ENCODE measurements at regions of chr1 and their contacts with region 1.

Region 1: DNA sequence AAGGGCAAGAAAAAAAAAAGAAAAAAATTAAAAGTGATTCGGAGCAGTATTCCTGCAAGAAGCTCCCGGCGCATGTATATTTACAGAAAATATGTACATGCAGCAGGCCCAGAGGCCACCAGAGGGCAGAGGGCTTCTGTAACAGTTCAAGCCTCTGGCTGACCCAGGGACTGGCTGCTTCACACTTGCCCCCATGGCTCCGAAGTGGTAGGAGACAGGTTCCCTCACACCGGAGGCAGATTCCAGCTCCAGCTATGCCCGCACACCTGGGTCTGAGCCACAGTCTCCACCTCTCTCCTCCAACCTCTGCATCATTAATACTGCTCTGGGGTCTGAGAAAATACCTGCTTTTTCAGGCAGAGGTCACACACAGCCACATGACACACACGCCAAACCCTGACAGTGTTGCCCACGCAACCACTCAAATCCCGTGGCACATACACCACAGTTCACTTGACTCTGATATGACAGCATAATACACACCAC is 2.2 kb upstream of the ARHGAP30 start:
- DNase-seq: peak; percentile 61
- H3K4me3 Mint-ChIP-seq: no peak overlapping the region
- H3K27ac Mint-ChIP-seq: peak overlapping the region; percentile 36
- H3K4me1 Mint-ChIP-seq: peaks cover 40% of the 10 kb centered on the region
- H3K27me3 Mint-ChIP-seq: no peaks in the 10 kb centered on the region

Region 2: GRCh38 chr1:160789702-160790611 is 282.0 kb before region 1 on chr1:
- CTCF ChIA-PET with region 1: no interaction called
- POLR2A ChIA-PET with region 1: no interaction called
- DNase-seq: no peak
- H3K4me3 Mint-ChIP-seq: no peak overlapping the region
- H3K27ac Mint-ChIP-seq: no peak overlapping the region
- H3K4me1 Mint-ChIP-seq: peaks cover 9% of the 10 kb centered on the region
- H3K27me3 Mint-ChIP-seq: peaks cover 4% of the 10 kb centered on the region

Region 3: DNA sequence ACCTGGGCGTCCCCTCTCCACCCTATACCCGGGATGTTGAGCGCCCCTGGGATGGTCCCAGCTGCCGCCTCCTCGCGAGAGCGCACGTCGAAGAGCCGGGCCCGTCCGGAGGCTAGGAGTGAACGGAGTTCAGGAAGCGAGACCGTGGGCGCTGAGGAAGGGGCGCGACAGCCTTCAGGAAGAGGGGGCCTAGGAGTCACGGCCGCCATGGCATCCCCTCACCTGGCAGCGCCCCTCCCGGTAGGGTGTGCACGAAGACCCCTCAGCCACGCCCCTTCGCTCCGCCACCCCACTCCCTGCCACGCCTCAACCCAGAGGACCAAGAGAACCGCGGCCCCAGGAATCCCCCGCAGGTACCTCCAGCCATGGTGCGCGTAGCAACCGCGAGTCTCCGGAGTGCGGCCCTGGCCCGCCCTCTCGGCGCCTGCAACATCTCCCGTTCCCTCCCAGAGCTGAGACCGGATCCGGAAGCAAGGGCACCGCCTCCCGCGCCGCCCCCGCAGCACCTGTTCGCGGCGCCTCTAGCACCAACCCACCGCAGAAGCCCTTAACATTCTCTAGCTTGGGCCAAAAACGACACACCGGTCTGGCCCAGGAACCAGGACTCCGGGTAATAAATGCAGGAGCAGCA is 33.3 kb before region 1 on chr1 and contains the start of gene TSTD1:
- CTCF ChIA-PET with region 1: interaction called, 21 read pairs
- POLR2A ChIA-PET with region 1: interaction called, 293 read pairs
- DNase-seq: peak; percentile 89
- H3K4me3 Mint-ChIP-seq: peak within 1 kb of the TSS; percentile 88
- H3K27ac Mint-ChIP-seq: peak within 1 kb of the TSS; percentile 88
- H3K4me1 Mint-ChIP-seq: peaks cover 50% of the 10 kb centered on the region
- H3K27me3 Mint-ChIP-seq: no peaks in the 10 kb centered on the region
- total RNA-seq, gene TSTD1: 56.1 to 63.8 TPM

Region 4: DNA sequence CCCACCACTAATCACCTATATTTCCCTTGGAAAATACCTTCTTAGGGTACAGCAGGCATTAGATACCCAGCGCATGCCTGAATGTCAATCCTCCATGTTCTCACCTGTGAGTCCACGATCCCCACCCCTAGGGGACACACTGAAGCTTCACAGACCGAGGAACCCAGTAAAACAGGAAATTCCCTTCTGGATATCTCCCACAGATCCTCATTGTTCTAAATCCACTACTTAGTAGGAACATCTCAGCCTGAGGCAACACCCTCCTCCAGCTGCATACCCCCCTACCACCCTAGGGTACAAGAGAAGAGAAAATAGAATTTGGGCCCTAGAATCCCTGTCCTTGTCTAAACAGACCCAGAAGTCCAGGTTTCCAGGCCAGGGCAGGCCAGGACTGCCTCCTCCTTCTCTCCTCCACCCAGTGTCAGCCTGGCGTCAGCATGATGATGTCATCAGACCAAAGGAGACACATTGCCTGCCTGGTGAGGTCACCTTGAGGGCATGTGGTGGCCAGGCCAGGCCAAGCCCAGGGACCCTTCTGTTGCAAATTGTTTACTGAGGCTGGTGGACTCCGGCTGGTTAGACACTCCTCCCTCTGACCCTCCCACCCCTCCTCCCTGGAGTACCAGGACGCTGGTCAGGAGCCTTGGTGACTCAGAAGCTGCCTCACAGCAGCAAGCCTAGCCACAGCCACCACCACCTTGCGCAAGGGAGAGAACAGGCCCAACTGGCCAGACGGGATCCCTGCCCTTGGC is 11.2 kb after region 1 on chr1:
- CTCF ChIA-PET with region 1: interaction called, 7 read pairs
- POLR2A ChIA-PET with region 1: interaction called, 20 read pairs
- DNase-seq: no peak
- H3K4me3 Mint-ChIP-seq: no peak overlapping the region
- H3K27ac Mint-ChIP-seq: no peak overlapping the region
- H3K4me1 Mint-ChIP-seq: peaks cover 11% of the 10 kb centered on the region
- H3K27me3 Mint-ChIP-seq: peaks cover 2% of the 10 kb centered on the region

Region 5: DNA sequence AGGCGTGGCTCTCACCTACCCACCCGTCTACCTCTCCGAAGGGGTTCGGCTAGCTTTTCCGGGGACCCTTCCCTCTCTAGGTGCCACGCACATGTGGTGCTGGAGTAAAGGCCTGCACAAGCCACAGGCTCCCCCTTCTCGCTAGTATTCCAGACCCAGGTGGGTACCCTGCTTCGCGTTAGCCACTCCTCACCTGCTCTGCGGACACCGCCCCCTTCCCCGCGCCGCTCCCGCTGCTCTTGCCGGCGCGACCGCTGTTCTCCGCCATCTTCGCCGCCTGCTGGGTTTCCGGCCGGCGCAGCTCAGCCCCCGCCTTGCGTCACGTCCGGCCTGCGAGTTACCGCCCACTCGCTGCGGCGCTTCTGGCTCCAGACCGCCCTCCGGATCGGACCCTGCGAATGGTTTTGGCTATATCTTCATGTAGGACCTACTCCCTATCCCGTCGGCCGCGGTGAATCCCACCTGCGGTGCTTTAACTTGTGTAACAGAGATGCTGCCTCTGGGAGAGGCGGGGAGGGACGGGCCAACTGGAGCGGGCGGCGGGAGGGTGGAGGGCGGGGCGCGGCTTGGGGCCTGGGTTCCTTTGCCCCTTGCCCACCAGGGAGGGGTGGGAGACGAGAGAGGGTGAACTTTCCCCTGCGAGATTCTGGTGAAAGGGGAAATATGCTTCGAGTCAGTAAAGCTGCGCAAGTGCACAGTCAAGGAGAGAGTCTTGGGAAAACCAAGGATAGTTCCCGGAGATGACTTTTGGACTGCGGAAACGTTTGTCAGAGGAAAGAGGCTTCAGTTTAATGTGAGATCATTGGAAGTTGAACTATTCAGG is 46.0 kb after region 1 on chr1 and contains the starts of genes NIT1 and PFDN2:
- CTCF ChIA-PET with region 1: interaction called, 10 read pairs
- POLR2A ChIA-PET with region 1: interaction called, 7 read pairs
- DNase-seq: peak; percentile 89
- H3K4me3 Mint-ChIP-seq: peak within 1 kb of the TSS; percentile 93
- H3K27ac Mint-ChIP-seq: peak within 1 kb of the TSS; percentile 95
- H3K4me1 Mint-ChIP-seq: peaks cover 66% of the 10 kb centered on the region
- H3K27me3 Mint-ChIP-seq: no peaks in the 10 kb centered on the region
- total RNA-seq, gene NIT1: 50.8 to 51.5 TPM
- total RNA-seq, gene PFDN2: 76.6 to 78.8 TPM

Region 6: GRCh38 chr1:161153679-161154426 is 81.9 kb after region 1 on chr1 and contains the start of gene UFC1:
- CTCF ChIA-PET with region 1: interaction called, 3 read pairs
- POLR2A ChIA-PET with region 1: interaction called, 40 read pairs
- DNase-seq: peak; percentile 85
- H3K4me3 Mint-ChIP-seq: peak within 1 kb of the TSS; percentile 92
- H3K27ac Mint-ChIP-seq: peak within 1 kb of the TSS; percentile 98
- H3K4me1 Mint-ChIP-seq: peaks cover 30% of the 10 kb centered on the region
- H3K27me3 Mint-ChIP-seq: no peaks in the 10 kb centered on the region
- total RNA-seq, gene UFC1: 103 to 113 TPM

Measured in activated CD4-positive, alpha-beta memory T cell treated with anti-CD3 and anti-CD28 coated beads, Interleukin-2, amount 10 ng/mL, durations not matched to agents 7 days and 5 days (primary cell).